Aorta (tissue), 5 donors: ENCODE measurements at regions of chr15 and their contacts with region 1.

Region 1: DNA sequence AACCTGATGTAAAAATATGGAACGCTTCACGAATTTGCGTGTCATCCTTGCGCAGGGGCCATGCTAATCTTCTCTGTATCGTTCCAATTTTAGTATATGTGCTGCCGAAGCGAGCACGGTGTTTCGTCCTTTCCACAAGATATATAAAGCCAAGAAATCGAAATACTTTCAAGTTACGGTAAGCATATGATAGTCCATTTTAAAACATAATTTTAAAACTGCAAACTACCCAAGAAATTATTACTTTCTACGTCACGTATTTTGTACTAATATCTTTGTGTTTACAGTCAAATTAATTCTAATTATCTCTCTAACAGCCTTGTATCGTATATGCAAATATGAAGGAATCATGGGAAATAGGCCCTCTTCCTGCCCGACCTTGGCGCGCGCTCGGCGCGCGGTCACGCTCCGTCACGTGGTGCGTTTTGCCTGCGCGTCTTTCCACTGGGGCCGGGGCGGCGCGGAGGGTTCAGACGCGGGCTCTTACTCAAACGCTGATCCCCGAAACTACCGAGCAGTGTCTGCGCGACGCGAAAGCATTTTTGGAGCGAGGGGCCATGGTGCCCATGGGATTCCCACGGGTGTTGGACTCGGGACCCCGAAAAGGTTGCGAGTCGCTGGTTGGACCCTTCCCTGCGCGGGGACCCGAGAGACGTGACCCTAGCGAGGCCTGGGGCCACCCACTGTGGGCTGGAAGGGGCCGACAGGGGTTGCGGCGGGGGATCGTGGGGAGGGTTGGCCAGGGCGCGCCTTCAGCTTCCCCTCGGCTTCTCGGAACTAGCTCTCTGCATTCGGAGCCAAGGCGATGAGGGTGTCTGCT is at the start of gene RNU6-1:
- DNase-seq: peak; percentile 96 to 98
- ATAC-seq: peak; percentile 96
- H3K4me3 ChIP-seq: peak within 1 kb of the TSS; percentile 53 to 96
- H3K27ac ChIP-seq: peak within 1 kb of the TSS; percentile 17 to 98
- H3K4me1 ChIP-seq: no peaks in the 10 kb centered on the region
- H3K27me3 ChIP-seq: no peaks in the 10 kb centered on the region
- total RNA-seq, gene RNU6-1: not detected

Region 2: DNA sequence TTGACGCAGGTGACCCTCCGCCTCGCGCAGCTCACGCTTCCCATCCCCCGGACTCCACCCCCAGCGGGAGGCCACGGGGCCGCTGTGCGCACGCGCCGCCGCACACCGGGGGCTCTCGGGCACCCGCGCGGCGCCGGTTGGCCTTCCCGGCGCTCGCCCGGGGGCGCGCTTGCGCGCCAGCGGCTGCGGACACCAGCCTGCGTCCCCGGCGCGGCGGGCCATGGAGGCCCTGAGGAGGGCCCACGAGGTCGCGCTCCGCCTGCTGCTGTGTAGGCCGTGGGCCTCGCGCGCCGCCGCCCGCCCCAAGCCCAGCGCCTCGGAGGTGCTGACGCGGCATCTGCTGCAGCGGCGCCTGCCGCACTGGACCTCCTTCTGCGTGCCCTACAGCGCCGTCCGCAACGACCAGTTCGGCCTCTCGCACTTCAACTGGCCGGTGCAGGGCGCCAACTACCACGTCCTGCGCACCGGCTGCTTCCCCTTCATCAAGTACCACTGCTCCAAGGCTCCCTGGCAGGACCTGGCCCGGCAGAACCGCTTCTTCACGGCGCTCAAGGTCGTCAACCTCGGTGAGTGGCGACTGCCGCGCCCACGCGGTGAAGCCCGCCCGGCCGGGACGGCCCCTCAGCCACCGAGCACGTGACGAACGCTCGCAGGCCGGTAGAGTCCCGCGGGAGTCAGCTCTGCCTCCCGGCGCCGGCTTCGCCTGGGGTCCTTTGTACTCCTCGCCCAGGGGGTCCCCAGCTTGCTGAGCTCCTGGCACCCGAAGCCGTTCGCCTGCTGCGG is 318.9 kb before region 1 on chr15 and contains the start of gene C15orf61:
- intact Hi-C with region 1: loop called in 1 of 2 experiments (anchors 10 kb)
- DNase-seq: peak; percentile 89 to 93
- ATAC-seq: peak; percentile 93
- H3K4me3 ChIP-seq: peak within 1 kb of the TSS; percentile 67 to 85
- H3K27ac ChIP-seq: peak within 1 kb of the TSS; percentile 46 to 81
- H3K4me1 ChIP-seq: no peaks in the 10 kb centered on the region
- H3K27me3 ChIP-seq: no peaks in the 10 kb centered on the region
- total RNA-seq, gene C15orf61: 3.0 to 4.4 TPM

Region 3: DNA sequence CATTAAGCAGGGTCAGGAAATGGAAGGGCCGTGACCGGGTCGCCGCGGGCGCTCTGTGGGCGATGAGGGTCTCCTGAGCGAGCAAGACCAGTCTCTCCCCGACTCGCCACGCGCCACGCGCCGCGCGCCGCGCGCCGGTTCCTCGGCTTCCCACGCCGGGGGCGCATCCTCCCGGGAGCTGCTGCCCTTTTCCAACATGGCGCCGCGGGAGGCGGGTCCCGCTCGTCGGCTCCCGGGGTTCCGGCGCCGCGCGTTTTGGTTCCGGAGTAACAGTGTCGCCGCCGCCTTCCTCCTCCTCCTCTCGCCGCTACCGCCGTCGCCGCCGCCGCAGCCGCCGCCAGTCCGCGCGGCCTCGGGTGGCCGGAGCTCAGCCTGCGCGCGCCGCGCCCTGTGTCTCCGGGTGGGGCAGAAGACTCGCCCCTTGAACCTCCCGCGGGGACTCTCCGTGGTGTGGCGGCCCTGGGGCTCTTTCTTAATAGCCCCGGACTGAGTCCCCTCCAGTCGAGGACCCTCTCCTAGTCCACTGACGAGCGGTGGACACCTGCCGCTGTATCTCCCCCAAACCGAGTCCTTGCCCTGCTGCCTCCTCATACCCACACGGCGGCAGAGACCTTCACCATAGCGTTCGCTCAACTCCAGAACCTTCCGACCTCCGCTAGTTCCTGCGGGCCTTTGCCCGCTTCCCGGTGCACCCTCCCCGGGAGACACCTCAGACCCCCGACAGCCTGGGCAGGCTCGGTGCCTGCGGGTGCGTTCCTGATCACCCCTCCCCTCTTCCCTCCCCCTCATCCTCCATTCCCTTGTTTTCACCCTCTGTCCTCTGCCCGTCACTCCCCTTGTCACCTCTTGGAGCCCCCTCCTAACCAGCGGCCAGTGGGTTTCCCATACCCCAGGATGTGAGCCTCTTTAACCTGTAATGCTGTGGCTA is 297.5 kb before region 1 on chr15 and contains the start of gene MAP2K5:
- intact Hi-C with region 1: loop called in 1 of 2 experiments (anchors 10 kb)
- DNase-seq: peak; percentile 92 to 97
- ATAC-seq: peak; percentile 93
- H3K4me3 ChIP-seq: peak within 1 kb of the TSS; percentile 62 to 99
- H3K27ac ChIP-seq: peak within 1 kb of the TSS in 1 of 2 donors; percentile 20
- H3K4me1 ChIP-seq: peaks cover 0 to 3% of the 10 kb centered on the region in 2 donors
- H3K27me3 ChIP-seq: no peaks in the 10 kb centered on the region
- total RNA-seq, gene MAP2K5: 17.6 to 29.2 TPM

Region 4: GRCh38 chr15:67613708-67614107 is 226.4 kb before region 1 on chr15:
- intact Hi-C with region 1: no loop called
- DNase-seq: no peak
- ATAC-seq: no peak
- H3K4me3 ChIP-seq: no peak overlapping the region
- H3K27ac ChIP-seq: no peak overlapping the region
- H3K4me1 ChIP-seq: no peaks in the 10 kb centered on the region
- H3K27me3 ChIP-seq: no peaks in the 10 kb centered on the region

Region 5: DNA sequence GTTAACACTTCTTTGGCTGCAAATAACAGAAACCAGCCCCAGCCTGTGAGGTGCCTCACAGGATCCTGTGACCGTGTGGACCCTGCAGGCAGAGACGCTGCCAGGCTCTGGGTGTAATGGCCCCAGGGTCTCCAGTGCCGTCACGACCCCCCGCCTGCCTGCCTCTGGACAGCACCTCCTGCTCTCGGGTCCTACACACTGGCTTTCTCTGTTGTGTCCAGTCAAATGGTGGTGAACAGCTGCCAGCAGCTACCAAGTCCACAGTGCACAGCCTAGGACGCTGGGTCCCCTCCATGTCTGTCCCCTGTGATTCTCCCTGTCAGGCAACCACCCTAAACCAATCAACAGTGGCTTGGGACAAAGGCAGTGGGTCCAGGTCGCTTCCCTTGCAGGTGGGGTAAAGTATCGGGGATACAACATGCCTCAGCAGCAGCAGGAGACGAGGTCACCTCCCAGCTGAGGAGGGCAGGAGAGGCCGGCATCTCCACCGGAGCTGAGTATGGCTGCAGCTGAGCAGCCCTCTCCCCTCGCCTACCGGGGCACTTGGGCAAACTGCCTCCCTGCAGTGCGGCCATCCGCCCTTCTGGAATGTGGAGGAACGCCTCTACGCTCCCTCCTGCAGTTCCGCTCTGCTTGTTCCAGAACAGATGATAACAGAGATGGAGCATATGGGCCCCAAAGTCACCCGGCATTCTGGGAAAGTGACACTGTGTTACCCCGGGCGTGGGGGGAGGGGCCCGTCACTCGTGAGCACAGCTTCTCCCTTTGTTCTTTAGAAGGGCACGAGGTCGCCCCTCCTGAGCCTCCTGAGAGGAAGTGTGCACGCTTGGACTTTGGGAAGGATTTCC is 35.9 kb before region 1 on chr15:
- intact Hi-C with region 1: no loop called
- DNase-seq: peak in 1 of 2 donors; percentile 63
- ATAC-seq: no peak
- H3K4me3 ChIP-seq: no peak overlapping the region
- H3K27ac ChIP-seq: no peak overlapping the region
- H3K4me1 ChIP-seq: no peaks in the 10 kb centered on the region
- H3K27me3 ChIP-seq: no peaks in the 10 kb centered on the region